Breast epithelium (tissue), 4 donors: ENCODE measurements at regions of chr11 and their contacts with region 1.

Region 1: GRCh38 chr11:61049859-61050258 is 52.4 kb upstream of the CD5 start:
- DNase-seq: no peak
- H3K4me3 ChIP-seq: no peak overlapping the region
- H3K27ac ChIP-seq: no peak overlapping the region
- H3K4me1 ChIP-seq: no peaks in the 10 kb centered on the region
- H3K27me3 ChIP-seq: no peaks in the 10 kb centered on the region
- CTCF ChIP-seq: no peak
- POLR2A ChIP-seq: no peak

Region 2: GRCh38 chr11:60992842-60993409 is 56.9 kb before region 1 on chr11:
- intact Hi-C with region 1: no loop called
- DNase-seq: no peak
- H3K4me3 ChIP-seq: no peak overlapping the region
- H3K27ac ChIP-seq: no peak overlapping the region
- H3K4me1 ChIP-seq: no peaks in the 10 kb centered on the region
- H3K27me3 ChIP-seq: no peaks in the 10 kb centered on the region
- CTCF ChIP-seq: no peak
- POLR2A ChIP-seq: no peak

Region 3: DNA sequence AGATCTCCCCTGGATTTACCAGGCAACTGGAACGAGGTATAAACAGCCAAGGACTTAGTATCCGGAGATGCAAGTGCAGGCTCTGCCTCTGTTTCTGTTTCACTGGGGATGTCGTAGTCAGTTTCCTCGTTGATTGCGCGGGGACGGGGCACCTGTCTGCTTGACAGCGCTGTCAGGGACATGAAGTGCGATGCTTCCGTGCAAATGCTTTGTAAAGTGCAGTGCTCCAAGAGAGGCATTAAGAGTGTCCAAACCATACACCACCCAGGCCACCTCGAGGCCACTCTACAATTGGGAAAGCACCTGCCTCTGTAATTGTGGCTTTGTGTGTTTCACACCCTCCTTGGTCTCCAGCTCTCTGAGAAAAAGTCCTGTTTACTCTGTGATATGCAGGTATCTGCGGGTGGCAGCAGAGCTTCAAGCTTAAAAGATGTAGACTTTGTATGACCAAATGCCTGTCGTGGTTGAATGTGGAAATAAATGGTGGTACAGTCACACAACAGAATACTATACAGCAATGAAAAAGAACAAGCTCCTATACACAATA is 33.8 kb after region 1 on chr11:
- intact Hi-C with region 1: loop called (anchors 2 kb)
- DNase-seq: no peak
- H3K4me3 ChIP-seq: no peak overlapping the region
- H3K27ac ChIP-seq: no peak overlapping the region
- H3K4me1 ChIP-seq: no peaks in the 10 kb centered on the region
- H3K27me3 ChIP-seq: no peaks in the 10 kb centered on the region
- CTCF ChIP-seq: no peak
- POLR2A ChIP-seq: no peak